MCF 10A (cell line): ENCODE measurements at regions of chr4 and their contacts with region 1.

Region 1: GRCh38 chr4:53490965-53491622 is 100.2 kb downstream of the LNX1 start:
- DNase-seq: peak; percentile 85
- H3K4me3 Mint-ChIP-seq: no peak overlapping the region
- H3K27ac Mint-ChIP-seq: peak overlapping the region; percentile 83
- H3K4me1 Mint-ChIP-seq: no peaks in the 10 kb centered on the region
- H3K27me3 Mint-ChIP-seq: no peaks in the 10 kb centered on the region
- CTCF ChIP-seq: peak; percentile 39

Region 2: GRCh38 chr4:53267026-53267425 is 224.1 kb before region 1 on chr4:
- CTCF ChIA-PET with region 1: no interaction called
- POLR2A ChIA-PET with region 1: no interaction called
- intact Hi-C with region 1: no loop called
- DNase-seq: no peak
- H3K4me3 Mint-ChIP-seq: no peak overlapping the region
- H3K27ac Mint-ChIP-seq: no peak overlapping the region
- H3K4me1 Mint-ChIP-seq: peaks cover 5% of the 10 kb centered on the region
- H3K27me3 Mint-ChIP-seq: no peaks in the 10 kb centered on the region
- CTCF ChIP-seq: no peak

Region 3: DNA sequence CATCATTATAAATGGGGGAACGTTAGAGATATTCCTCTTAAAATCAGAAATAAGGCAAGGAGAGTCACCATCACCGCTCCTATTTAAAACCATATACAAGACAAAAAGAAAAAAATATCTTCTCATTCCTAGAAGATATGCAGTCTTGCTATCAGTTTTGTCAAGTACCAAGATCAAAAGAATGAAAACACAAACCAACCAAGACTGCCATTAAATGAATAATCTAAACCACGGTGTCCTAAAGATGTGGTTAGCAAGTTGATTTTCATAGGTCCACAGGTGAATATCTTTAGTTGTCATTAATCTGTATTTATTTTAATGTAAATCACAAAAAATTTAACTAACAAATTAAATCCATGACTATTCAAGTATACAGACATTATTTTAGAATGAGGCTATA is 164.6 kb before region 1 on chr4:
- CTCF ChIA-PET with region 1: no interaction called
- POLR2A ChIA-PET with region 1: no interaction called
- intact Hi-C with region 1: no loop called
- DNase-seq: no peak
- H3K4me3 Mint-ChIP-seq: no peak overlapping the region
- H3K27ac Mint-ChIP-seq: no peak overlapping the region
- H3K4me1 Mint-ChIP-seq: peaks cover 7% of the 10 kb centered on the region
- H3K27me3 Mint-ChIP-seq: no peaks in the 10 kb centered on the region
- CTCF ChIP-seq: no peak

Region 4: DNA sequence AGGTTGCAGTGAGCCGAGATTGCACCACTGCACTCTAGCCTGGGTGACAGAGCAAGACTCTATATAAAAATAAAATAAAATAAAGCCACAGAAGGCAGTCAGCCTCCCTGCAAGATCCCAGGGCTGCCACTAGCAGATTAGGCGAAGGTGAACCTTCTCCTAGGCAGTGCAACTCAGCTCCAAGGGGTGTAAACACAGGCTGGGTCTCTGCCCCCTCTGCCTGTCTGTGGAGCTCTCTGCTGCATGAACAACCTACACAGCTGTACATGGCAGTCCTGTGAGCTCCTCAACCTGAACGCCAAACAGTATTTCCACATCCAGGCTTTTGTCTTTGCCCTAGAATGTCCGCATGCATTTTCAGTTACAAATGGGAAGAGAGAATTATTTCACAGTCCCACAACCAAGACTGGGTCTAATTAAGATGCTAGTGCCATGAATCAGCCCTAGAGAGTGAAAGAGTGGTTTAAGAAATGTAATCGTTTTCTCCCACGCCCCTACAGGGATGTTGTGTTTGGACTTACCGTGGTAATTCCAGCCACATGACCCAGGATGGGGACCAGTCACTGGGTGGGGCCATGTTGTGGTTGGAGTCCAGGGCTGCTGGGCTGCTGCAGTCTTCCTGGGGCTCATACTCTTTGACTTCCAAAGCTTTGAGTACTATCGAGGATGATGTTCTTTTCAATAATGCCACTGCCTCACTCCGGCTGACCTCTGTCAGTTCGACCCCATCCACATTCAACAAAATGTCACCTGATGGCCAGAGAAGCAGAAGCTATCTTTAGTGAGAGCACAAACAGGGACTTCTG is 14.7 kb before region 1 on chr4:
- CTCF ChIA-PET with region 1: interaction called, 34 read pairs
- POLR2A ChIA-PET with region 1: interaction called, 14 read pairs
- intact Hi-C with region 1: no loop called
- DNase-seq: peak; percentile 76
- H3K4me3 Mint-ChIP-seq: peak overlapping the region; percentile 2
- H3K27ac Mint-ChIP-seq: peak overlapping the region; percentile 78
- H3K4me1 Mint-ChIP-seq: peaks cover 35% of the 10 kb centered on the region
- H3K27me3 Mint-ChIP-seq: no peaks in the 10 kb centered on the region
- CTCF ChIP-seq: no peak